ENCODE measurements at regions of chr11 and their contacts with region 1.

Region 1: DNA sequence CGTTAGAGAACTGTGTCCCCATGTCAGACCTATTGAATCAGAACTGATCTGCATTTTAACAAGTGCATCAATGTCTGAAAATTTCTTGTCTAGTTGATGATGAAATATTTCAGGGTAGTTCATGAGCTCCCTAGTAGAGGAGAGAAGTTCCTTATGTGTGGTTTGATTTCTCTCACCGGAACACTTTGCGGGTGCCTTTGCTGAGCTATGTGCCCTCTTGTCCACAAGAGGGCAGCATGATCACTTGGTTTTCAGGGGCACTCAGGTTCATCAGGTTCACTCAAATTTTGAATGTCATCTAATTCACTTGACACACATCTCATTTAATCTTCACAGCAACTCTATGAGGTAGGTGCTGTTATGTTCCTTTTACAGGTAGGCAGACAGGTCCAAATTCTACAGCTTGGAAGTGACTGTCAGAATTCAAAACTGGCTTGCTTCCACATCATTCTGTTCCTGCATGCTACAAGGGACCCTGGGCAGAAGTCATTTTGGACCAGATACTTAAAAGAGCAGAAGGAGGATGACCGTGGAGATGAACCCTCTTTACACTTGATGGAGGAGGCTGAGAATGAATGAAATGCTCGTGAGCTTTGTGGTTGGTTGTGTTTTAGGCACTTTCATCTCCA is 55.6 kb downstream of the P4HA3 start:
- DNase-seq: peak; percentile 73
- H3K4me3 ChIP-seq: no peak overlapping the region; a peak in 1 of 4 replicates
- H3K27ac ChIP-seq: no peak overlapping the region
- H3K4me1 ChIP-seq: peaks cover 0 to 10% of the 10 kb centered on the region in 2 experiments; a peak in 1 of 4 replicates
- H3K27me3 ChIP-seq: no peaks in the 10 kb centered on the region
- CTCF ChIP-seq: peak; percentile 97
- EP300 ChIP-seq: no peak
- RAD21 ChIP-seq: peak; percentile 90

Region 2: DNA sequence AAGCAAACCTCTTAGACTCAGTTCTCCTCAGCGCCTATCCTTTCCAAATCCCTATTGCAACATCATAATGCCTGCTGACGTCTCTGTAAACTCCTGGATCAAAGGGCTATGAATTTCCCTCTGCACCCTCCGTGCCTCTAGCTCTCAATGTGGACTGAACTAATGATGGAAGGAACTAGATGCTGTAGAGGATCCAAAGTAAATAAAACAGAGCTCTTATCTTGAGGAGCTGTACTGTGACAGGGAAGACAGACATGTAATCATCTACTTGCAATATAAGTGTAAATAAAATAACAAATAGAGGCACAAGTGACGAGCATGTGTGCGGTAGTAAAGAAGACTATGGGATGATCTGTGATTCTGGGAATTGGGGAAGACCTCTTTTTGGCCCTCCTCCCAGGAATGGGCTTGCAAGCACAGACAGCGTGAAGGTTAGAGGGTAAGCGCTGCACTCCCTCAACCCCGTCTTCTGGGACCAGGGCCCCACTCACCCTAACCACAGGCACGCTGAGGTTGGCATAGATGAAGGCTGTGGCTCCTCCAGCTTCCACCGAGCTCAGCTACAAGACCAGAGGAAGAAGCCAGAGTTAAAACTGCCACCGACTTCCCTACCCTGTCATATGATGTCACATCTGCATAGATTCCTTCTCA is 13.4 kb after region 1 on chr11:
- CTCF ChIA-PET with region 1: interaction called, 11 read pairs
- POLR2A ChIA-PET with region 1: no interaction called
- DNase-seq: no peak
- H3K4me3 ChIP-seq: no peak overlapping the region
- H3K27ac ChIP-seq: no peak overlapping the region
- H3K4me1 ChIP-seq: no peaks in the 10 kb centered on the region
- H3K27me3 ChIP-seq: no peaks in the 10 kb centered on the region
- CTCF ChIP-seq: no peak
- EP300 ChIP-seq: no peak
- RAD21 ChIP-seq: no peak

Region 3: DNA sequence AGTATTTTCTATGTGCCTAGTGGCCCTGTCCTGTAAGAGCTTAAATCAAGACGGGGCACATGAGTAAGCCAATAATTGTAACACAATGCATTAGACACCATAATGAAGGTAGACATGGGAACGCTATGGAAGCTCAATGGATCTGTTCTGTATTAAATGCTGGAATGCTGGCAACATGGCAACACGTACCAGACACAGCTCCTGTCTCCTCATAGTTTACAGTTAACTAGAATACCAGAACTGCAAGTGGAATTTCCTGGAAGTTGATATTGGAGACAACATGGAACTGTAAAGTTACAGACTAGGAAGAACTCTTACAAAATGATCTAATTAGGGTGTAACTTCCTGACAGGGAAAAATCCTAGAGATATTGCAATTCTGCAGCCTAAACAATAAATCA is 43.2 kb after region 1 on chr11:
- CTCF ChIA-PET with region 1: interaction called, 12 read pairs
- POLR2A ChIA-PET with region 1: no interaction called
- DNase-seq: no peak
- H3K4me3 ChIP-seq: no peak overlapping the region
- H3K27ac ChIP-seq: peak overlapping the region in 1 of 2 experiments; percentile 62; a peak in 1 of 4 replicates
- H3K4me1 ChIP-seq: no peaks in the 10 kb centered on the region; a peak in 1 of 4 replicates
- H3K27me3 ChIP-seq: no peaks in the 10 kb centered on the region
- CTCF ChIP-seq: no peak
- EP300 ChIP-seq: no peak
- RAD21 ChIP-seq: no peak

Region 4: GRCh38 chr11:74388678-74389327 is 132.9 kb after region 1 on chr11:
- CTCF ChIA-PET with region 1: interaction called, 15 read pairs
- POLR2A ChIA-PET with region 1: no interaction called
- DNase-seq: peak; percentile 59
- H3K4me3 ChIP-seq: no peak overlapping the region; a peak in 1 of 4 replicates
- H3K27ac ChIP-seq: no peak overlapping the region
- H3K4me1 ChIP-seq: peaks cover 3 to 9% of the 10 kb centered on the region in 2 experiments; a peak in 3 of 4 replicates
- H3K27me3 ChIP-seq: no peaks in the 10 kb centered on the region
- CTCF ChIP-seq: peak; percentile 90
- EP300 ChIP-seq: no peak
- RAD21 ChIP-seq: peak; percentile 73

Region 5: DNA sequence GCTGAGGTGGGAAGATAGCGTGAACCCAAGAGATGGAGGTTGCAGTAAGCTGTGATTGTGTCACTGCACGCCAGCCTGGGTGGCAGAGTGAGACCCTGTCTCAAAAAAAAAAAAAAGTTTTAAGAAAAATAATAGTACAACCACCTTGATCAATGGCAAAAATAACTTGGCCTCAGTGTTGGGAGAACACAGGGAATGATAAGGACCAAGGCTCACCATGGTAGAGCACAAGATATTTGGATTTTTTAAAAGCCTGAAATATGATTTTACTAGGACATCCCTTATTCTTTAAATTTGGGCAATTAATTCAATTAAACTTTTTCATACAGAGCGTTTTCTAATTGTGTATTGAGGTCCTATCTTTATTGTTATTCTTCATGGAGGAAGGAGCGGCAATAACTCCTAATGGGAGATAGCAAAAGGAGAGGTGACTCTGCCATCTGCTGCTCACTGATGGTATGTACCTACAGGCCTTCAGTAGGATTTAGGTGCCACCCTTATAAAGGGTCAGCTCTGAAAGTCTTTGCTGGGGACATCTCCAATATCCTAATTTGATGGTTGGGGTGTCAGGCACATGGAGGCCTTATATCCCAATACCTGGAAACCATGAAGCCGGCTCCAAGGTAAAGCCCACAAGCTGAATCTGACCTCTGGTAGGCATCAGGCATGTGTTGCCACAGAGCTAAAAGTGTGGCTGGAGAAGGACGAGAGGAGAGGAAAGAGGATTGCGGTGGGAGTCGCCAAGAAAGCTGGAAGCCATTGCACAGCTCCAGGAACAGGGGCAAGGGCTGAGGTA is 314.6 kb after region 1 on chr11:
- CTCF ChIA-PET with region 1: interaction called, 17 read pairs
- POLR2A ChIA-PET with region 1: no interaction called
- DNase-seq: peak; percentile 70
- H3K4me3 ChIP-seq: no peak overlapping the region; a peak in 1 of 4 replicates
- H3K27ac ChIP-seq: no peak overlapping the region
- H3K4me1 ChIP-seq: no peaks in the 10 kb centered on the region
- H3K27me3 ChIP-seq: no peaks in the 10 kb centered on the region; the same call in 1 of the 2 replicates
- CTCF ChIP-seq: peak; percentile 74
- EP300 ChIP-seq: no peak
- RAD21 ChIP-seq: peak; percentile 93

Measured in SK-N-SH (cell line).